H1 (cell line): ENCODE measurements at regions of chr11 and their contacts with region 1.

Region 1: DNA sequence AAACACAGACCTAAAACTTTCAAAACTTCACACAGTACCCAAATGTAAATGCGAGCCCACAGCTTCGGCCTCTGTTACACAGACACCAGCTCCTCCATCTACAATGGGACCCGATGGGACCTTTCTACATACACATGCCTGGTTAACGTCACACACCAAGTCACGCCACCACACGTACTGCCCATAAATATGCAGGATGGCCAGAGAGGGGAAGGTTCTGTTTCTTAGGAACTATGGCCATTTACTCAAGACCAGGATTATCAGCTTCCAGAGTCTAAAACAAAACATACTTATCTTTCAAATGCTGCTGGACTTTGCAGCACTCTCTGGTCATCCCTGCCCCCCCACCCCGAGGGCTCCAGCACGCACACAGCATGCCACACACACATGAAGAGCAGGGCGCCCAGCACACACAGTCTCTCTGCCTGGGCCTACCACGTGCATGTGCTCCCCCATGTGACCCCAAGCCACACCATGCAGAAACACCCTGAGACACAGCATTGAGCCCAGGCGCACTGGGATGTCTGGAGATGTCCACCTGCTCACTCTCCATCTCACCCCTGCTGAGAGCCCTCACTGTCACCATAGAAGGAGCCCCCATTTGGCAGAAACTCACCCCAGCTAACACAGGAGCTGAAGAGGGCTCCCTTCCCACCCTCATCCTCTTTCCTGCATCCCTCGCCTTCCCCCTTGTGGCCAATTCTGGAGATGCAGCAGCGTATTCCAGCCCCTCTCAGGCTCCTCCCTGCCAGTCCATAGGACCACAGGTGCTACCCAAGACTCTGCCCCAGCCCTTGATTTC is 61.8 kb downstream of the SLC22A12 start:
- DNase-seq: peak; percentile 67 to 99
- H3K4me3 ChIP-seq: peak overlapping the region in 1 of 4 experiments; percentile 15; a peak in 1 of 8 replicates
- H3K27ac ChIP-seq: no peak overlapping the region
- H3K4me1 ChIP-seq: peaks cover 0 to 8% (median 5%) of the 10 kb centered on the region in 4 experiments; a peak in 3 of 7 replicates
- H3K27me3 ChIP-seq: peaks cover 0 to 5% (median 2%) of the 10 kb centered on the region in 4 experiments; a peak in 3 of 7 replicates
- CTCF ChIP-seq: peak; percentile 93 to 97 (median 94)
- EP300 ChIP-seq: no peak
- POLR2A ChIP-seq: no peak
- RAD21 ChIP-seq: peak; percentile 81 to 87

Region 2: DNA sequence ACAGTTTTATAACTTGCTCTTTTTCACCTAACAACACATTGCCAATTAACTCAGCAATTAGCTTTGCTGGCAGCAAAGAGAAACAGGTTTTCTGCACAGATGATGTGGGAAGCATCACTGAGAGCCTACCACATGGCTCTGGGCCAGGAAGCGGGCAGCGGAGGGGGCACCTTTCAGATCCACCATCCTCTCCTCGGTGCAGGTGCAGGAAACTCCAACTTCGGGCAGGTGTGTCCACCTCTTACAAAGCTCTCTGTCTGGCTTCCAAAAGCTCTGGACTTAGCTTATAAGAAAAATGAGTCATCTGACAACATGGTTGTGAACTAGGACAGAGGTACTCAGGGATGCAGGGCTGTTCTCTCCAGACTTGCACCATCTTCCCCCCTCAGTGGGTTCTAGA is 216.8 kb before region 1 on chr11:
- CTCF ChIA-PET with region 1: interaction called, 12 read pairs
- POLR2A ChIA-PET with region 1: interaction called, 3 read pairs
- DNase-seq: no peak
- H3K4me3 ChIP-seq: no peak overlapping the region
- H3K27ac ChIP-seq: no peak overlapping the region
- H3K4me1 ChIP-seq: peaks cover 0 to 2% (median 0%) of the 10 kb centered on the region in 4 experiments; a peak in 1 of 7 replicates
- H3K27me3 ChIP-seq: peaks cover 0 to 4% (median 2%) of the 10 kb centered on the region in 4 experiments; a peak in 3 of 7 replicates
- CTCF ChIP-seq: no peak
- EP300 ChIP-seq: no peak
- POLR2A ChIP-seq: no peak
- RAD21 ChIP-seq: no peak

Region 3: GRCh38 chr11:64516226-64516625 is 136.6 kb before region 1 on chr11:
- CTCF ChIA-PET with region 1: interaction called, 18 read pairs
- POLR2A ChIA-PET with region 1: no interaction called
- DNase-seq: no peak
- H3K4me3 ChIP-seq: no peak overlapping the region
- H3K27ac ChIP-seq: no peak overlapping the region
- H3K4me1 ChIP-seq: no peaks in the 10 kb centered on the region
- H3K27me3 ChIP-seq: peaks cover 0 to 19% (median 9%) of the 10 kb centered on the region in 4 experiments; a peak in 4 of 7 replicates
- CTCF ChIP-seq: peak; percentile 26 to 77 (median 52)
- EP300 ChIP-seq: no peak
- POLR2A ChIP-seq: no peak
- RAD21 ChIP-seq: peak; percentile 27 to 49; a peak in 3 of 4 replicates

Region 4: DNA sequence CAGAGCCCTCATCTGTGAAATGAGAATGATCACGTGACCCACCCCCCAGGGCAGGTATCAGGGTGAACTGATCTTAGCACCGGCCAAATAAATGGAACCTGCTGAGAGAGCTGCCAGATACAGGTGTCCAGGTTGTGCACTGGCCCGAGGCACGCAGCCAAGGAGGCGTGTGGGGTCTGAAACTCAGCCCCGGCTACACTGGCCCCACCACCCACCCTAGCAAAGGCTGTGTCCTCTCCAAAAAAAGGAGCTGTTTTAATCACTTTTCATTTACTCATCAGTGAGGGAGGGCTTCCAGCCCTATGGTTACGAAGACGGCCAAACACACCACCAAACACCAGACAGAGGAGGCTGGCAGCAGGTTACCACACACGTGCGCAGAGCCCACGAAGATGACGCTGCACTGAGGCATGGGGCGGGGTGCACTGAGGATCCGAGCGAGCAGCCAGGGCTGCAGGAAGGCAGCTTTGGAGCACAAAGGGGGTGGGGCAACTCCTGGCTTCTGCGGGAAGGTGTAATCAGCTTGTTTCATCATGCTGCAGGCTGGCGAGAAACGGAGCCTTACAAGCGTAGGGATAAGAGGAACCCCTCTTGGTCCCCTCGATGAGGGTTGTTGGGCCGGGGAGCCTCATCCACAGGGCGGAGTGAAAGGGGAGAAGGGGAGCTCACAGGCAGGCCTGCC is 81.2 kb before region 1 on chr11:
- CTCF ChIA-PET with region 1: interaction called, 75 read pairs
- POLR2A ChIA-PET with region 1: interaction called, 5 read pairs
- DNase-seq: no peak
- H3K4me3 ChIP-seq: no peak overlapping the region
- H3K27ac ChIP-seq: no peak overlapping the region
- H3K4me1 ChIP-seq: peaks cover 0 to 18% (median 12%) of the 10 kb centered on the region in 4 experiments; a peak in 6 of 7 replicates
- H3K27me3 ChIP-seq: peaks cover 0 to 3% (median 0%) of the 10 kb centered on the region in 4 experiments; a peak in 3 of 7 replicates
- CTCF ChIP-seq: no peak
- EP300 ChIP-seq: no peak
- POLR2A ChIP-seq: no peak
- RAD21 ChIP-seq: no peak

Region 5: GRCh38 chr11:64638018-64638665 is 14.6 kb before region 1 on chr11:
- CTCF ChIA-PET with region 1: interaction called, 188 read pairs
- POLR2A ChIA-PET with region 1: interaction called, 5 read pairs
- DNase-seq: peak in 1 of 2 experiments; percentile 75
- H3K4me3 ChIP-seq: peak overlapping the region; percentile 46 to 71 (median 51)
- H3K27ac ChIP-seq: no peak overlapping the region
- H3K4me1 ChIP-seq: peaks cover 0 to 19% (median 13%) of the 10 kb centered on the region in 4 experiments; a peak in 6 of 7 replicates
- H3K27me3 ChIP-seq: peaks cover 38 to 62% (median 52%) of the 10 kb centered on the region in 4 experiments
- CTCF ChIP-seq: no peak
- EP300 ChIP-seq: no peak
- POLR2A ChIP-seq: no peak
- RAD21 ChIP-seq: no peak

Region 6: DNA sequence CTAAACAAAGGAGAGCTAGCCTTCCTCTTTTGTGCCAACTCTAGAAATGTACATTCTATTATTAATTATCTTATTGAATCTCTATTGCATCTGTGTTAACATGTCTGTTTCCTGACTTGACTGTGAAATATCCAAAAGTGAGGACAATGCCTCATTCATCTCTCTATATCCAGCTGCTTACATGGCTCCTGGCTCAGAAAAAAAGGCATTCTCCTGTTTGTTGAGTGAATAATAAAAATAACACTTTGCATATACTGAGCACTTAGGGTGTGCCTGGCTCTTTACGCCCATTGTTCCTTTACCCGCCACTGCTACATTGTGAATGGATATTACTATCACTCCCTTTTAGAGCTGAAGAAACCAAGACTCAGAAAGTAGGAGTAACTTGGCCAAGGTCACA is 50.3 kb after region 1 on chr11:
- CTCF ChIA-PET with region 1: interaction called, 37 read pairs
- POLR2A ChIA-PET with region 1: interaction called, 3 read pairs
- DNase-seq: no peak
- H3K4me3 ChIP-seq: no peak overlapping the region
- H3K27ac ChIP-seq: no peak overlapping the region
- H3K4me1 ChIP-seq: peaks cover 0 to 3% (median 2%) of the 10 kb centered on the region in 4 experiments; a peak in 3 of 7 replicates
- H3K27me3 ChIP-seq: 0 out of 7 replicates have a peak, but pooled peaks cover 0 to 2% (median 0%) of the 10 kb centered on the region in 4 experiments
- CTCF ChIP-seq: no peak
- EP300 ChIP-seq: no peak
- POLR2A ChIP-seq: no peak
- RAD21 ChIP-seq: no peak